ENCODE measurements at regions of chr15 and their contacts with region 1.

Region 1: GRCh38 chr15:55799291-55800212 is 56.6 kb upstream of the PRTG start:
- DNase-seq: no peak
- H3K4me3 ChIP-seq: no peak overlapping the region
- H3K27me3 ChIP-seq: no peaks in the 10 kb centered on the region
- CTCF ChIP-seq: peak; percentile 66

Region 2: GRCh38 chr15:55279746-55280351 is 519.7 kb before region 1 on chr15:
- CTCF ChIA-PET with region 1: no interaction called
- POLR2A ChIA-PET with region 1: no interaction called
- DNase-seq: peak; percentile 73
- H3K4me3 ChIP-seq: no peak overlapping the region
- H3K27me3 ChIP-seq: no peaks in the 10 kb centered on the region
- CTCF ChIP-seq: no peak

Region 3: DNA sequence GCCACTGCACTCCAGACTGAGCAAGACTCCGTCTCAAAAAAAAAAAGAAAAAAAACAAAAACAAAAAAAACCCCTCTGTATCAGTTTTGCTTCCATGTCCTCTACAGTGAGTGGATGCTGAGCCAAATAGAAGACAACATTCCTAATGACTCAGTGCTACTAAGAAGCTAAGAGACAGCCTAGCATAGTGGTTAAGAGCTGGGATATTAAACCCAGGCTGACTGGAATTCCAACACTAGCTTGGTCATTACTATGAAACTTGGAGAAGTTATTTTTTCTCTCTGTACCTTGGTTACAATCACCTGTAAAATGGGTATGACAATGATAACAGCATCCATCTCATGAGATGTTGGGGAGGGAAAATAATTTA is 150.5 kb before region 1 on chr15:
- CTCF ChIA-PET with region 1: interaction called, 77 read pairs
- POLR2A ChIA-PET with region 1: no interaction called
- DNase-seq: peak; percentile 25
- H3K4me3 ChIP-seq: no peak overlapping the region
- H3K27me3 ChIP-seq: no peaks in the 10 kb centered on the region
- CTCF ChIP-seq: no peak

Region 4: DNA sequence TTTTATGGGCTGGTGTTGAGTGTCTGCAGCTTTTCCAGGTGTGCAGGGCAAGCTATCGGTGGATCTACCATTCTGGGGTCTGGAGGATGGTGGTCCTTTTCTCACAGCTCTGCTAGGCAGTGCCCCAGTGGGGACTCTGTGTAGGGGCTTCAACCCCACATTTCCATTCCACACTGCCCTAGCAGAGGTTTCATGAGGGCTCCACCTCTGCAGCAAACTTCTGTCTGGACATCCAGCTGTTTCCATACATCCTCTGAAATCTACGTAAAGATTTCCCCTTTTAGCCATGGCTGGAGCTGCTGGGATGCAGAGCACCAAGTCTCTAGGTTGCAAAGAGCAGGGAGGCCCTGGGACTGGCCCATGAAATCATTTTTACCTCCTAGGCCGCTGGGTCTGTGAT is 432.5 kb after region 1 on chr15:
- CTCF ChIA-PET with region 1: no interaction called
- POLR2A ChIA-PET with region 1: no interaction called
- DNase-seq: no peak
- H3K4me3 ChIP-seq: no peak overlapping the region
- H3K27me3 ChIP-seq: no peaks in the 10 kb centered on the region
- CTCF ChIP-seq: no peak